K562 (cell line): ENCODE measurements at regions of chr1 and their contacts with region 1.

Region 1: DNA sequence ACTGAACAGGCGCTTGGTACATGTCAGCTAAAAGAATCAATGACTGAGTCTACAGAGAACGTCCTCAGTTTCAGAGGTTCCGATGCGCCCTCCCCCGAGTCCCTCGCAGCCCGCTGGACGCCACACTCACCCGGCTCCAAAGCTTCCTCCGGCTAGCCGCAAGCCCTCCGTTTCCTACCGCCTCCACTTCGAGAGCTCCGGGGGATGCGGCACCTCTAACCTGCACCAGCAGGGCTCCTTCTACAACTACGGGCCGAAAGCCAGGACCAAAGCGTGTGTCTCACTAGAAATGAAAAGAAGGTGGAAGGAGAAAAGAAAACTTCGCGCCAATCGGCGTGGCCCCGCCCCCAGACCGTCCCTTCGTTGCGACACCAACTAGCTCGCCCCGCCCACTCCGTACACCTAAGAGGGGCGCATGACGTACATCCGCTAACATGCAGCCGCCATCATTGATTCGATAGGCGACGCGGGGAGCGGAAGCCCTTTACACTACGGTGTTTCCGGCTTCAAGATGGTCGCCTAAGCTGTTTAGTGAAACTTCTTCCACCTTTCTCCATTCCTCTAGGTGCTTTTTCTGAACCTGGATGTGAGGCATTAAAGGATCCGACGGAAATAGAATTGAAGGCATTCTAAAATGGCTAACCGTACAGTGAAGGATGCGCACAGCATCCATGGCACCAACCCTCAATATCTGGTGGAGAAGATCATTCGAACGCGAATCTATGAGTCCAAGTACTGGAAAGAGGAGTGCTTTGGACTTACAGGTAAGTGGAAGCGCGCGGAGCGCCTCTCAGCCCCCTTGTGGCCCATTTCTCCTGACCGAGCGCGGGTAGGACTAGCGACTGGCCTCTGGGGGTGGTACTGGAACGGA is at the starts of genes ORC1 and PRPF38A:
- DNase-seq: peak; percentile 94 to 100 (median 97)
- ATAC-seq: peak; percentile 90
- H3K4me3 ChIP-seq: peak within 1 kb of the TSS; percentile 80
- H3K27ac ChIP-seq: peak within 1 kb of the TSS; percentile 98
- H3K4me1 ChIP-seq: peaks cover 12 to 27% of the 10 kb centered on the region in 2 experiments; a peak in 4 of 5 replicates
- H3K27me3 ChIP-seq: no peaks in the 10 kb centered on the region
- CTCF ChIP-seq: peak; percentile 90 to 99 (median 95)
- EP300 ChIP-seq: no peak; the same call in 1 of the 2 replicates
- POLR2A ChIP-seq: peak; percentile 98
- RAD21 ChIP-seq: peak in 1 of 2 experiments; percentile 69; a peak in 2 of 4 replicates
- polyA plus RNA-seq, gene ORC1: 26.4 to 46.9 TPM
- polyA plus RNA-seq, gene PRPF38A: 126 to 198 TPM

Region 2: GRCh38 chr1:52365746-52366516 is 38.4 kb before region 1 on chr1 and contains the start of gene CC2D1B:
- CTCF ChIA-PET with region 1: no interaction called
- POLR2A ChIA-PET with region 1: interaction called, 29 read pairs
- in situ Hi-C with region 1: no loop called
- intact Hi-C with region 1: no loop called
- DNase-seq: peak; percentile 100
- ATAC-seq: peak; percentile 96
- H3K4me3 ChIP-seq: peak within 1 kb of the TSS; percentile 77
- H3K27ac ChIP-seq: peak within 1 kb of the TSS; percentile 93
- H3K4me1 ChIP-seq: peaks cover 21 to 37% of the 10 kb centered on the region in 2 experiments
- H3K27me3 ChIP-seq: no peaks in the 10 kb centered on the region
- CTCF ChIP-seq: peak in 2 of 3 experiments; percentile 21 to 27; a peak in 4 of 6 replicates
- EP300 ChIP-seq: peak; percentile 18; the same call in 1 of the 2 replicates
- POLR2A ChIP-seq: peak; percentile 93
- RAD21 ChIP-seq: peak in 1 of 2 experiments; percentile 15; a peak in 1 of 4 replicates
- polyA plus RNA-seq, gene CC2D1B: 1.2 to 1.5 TPM

Region 3: GRCh38 chr1:52432807-52433206 is 28.5 kb after region 1 on chr1:
- CTCF ChIA-PET with region 1: no interaction called
- POLR2A ChIA-PET with region 1: interaction called, 10 read pairs
- in situ Hi-C with region 1: no loop called
- intact Hi-C with region 1: no loop called
- DNase-seq: no peak
- ATAC-seq: peak; percentile 31; the same call in 1 of the 3 replicates
- H3K4me3 ChIP-seq: no peak overlapping the region
- H3K27ac ChIP-seq: no peak overlapping the region
- H3K4me1 ChIP-seq: no peaks in the 10 kb centered on the region
- H3K27me3 ChIP-seq: no peaks in the 10 kb centered on the region
- CTCF ChIP-seq: no peak
- EP300 ChIP-seq: no peak
- POLR2A ChIP-seq: no peak
- RAD21 ChIP-seq: no peak

Region 4: DNA sequence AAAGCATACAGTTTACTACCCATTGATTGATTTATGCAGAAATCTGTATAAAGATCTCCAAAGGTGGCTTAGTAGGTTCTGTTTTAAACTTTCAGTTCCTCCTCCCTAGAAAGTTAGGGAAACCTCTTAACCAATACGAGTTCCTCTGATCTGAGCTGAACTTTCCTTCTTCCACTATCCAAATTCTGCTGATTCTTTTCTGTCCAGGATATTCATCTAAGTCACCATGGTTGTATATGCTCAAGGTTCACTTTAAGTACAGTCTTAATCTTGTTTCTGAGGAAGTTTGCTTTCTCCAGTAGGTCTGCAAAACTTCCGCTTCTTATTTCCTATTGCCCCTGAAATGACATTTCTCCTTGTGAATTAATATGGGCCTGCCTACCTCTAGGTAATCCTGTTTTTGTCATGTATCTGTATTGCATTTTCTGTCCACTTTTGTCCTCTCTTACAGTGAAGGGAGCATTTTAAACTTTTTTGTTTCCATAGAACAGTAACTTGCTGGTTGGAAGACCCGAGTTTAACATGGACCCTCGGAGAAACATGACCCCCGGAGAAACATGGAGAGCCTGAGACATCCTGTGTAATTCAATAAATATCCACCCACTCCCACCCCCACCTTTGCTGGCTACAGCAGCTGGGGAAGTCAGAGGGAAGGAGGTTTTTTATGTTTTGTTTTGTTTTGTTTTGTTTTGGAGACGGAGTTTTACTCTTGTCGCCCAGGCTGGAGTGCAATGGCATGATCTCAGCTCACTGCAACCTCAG is 165.3 kb after region 1 on chr1:
- CTCF ChIA-PET with region 1: interaction called, 3 read pairs
- POLR2A ChIA-PET with region 1: interaction called, 3 read pairs
- in situ Hi-C with region 1: no loop called
- intact Hi-C with region 1: loop called (anchors 5 kb)
- DNase-seq: no peak
- ATAC-seq: no peak
- H3K4me3 ChIP-seq: no peak overlapping the region
- H3K27ac ChIP-seq: no peak overlapping the region
- H3K4me1 ChIP-seq: peaks cover 5 to 6% of the 10 kb centered on the region in 2 experiments; a peak in 1 of 5 replicates
- H3K27me3 ChIP-seq: no peaks in the 10 kb centered on the region
- CTCF ChIP-seq: no peak
- EP300 ChIP-seq: no peak
- POLR2A ChIP-seq: no peak
- RAD21 ChIP-seq: no peak

Region 5: DNA sequence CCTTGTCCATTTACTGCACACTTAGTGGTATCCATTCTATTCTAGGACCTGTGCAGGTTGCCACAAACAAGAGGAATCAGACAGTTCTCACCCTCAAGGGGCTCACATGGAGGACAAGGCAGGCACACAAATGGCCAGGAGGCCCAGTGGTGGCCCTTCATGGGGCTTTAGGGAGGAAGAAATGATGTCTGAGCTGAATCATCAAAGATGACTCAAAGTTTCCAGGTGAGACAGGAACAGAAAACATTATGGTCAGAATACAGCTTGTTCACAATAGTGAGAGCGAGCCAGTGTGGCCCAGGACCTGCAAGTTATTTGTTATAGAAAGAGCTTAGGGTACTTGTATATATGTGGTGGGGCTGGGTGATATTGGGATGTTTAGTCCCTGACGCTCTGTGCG is 255.0 kb after region 1 on chr1:
- CTCF ChIA-PET with region 1: no interaction called
- POLR2A ChIA-PET with region 1: no interaction called
- in situ Hi-C with region 1: no loop called
- intact Hi-C with region 1: no loop called
- DNase-seq: no peak
- ATAC-seq: no peak
- H3K4me3 ChIP-seq: no peak overlapping the region
- H3K27ac ChIP-seq: no peak overlapping the region
- H3K4me1 ChIP-seq: peaks cover 2% of the 10 kb centered on the region in 2 experiments; a peak in 3 of 5 replicates
- H3K27me3 ChIP-seq: no peaks in the 10 kb centered on the region
- CTCF ChIP-seq: no peak
- EP300 ChIP-seq: no peak
- POLR2A ChIP-seq: no peak
- RAD21 ChIP-seq: no peak

Region 6: DNA sequence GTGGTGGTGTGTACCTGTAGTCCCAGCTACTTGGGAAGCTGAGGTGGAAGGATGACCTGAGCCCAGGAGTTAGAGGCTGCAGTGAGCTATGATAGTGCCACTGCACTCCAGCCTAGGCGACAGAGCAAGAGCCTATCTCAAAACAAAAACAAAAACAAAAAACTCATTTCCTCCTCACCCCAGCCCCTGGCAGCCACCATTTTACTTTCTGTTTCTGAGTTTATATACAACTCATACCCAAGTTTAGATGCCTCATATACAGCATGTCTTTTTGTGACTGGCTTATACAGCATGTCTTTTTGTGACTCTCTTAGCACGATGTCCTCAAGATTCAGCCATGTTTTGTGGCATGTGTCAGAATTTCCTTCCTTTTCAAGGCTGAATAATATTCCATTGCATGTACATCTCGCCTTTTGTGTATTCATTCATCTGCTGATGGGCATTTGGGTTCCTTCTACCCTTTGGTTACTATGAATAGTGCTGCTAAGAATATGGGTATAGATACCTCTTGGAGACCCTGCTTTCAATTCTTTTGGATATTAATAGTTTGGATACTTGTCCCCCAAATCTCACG is 279.1 kb after region 1 on chr1:
- CTCF ChIA-PET with region 1: interaction called, 5 read pairs
- POLR2A ChIA-PET with region 1: interaction called, 20 read pairs
- in situ Hi-C with region 1: loop called (anchors 10 kb)
- intact Hi-C with region 1: loop called (anchors 5 kb)
- DNase-seq: no peak
- ATAC-seq: no peak
- H3K4me3 ChIP-seq: no peak overlapping the region
- H3K27ac ChIP-seq: no peak overlapping the region
- H3K4me1 ChIP-seq: no peaks in the 10 kb centered on the region; a peak in 1 of 5 replicates
- H3K27me3 ChIP-seq: no peaks in the 10 kb centered on the region; a peak in 1 of 5 replicates
- CTCF ChIP-seq: no peak
- EP300 ChIP-seq: no peak
- POLR2A ChIP-seq: peak; percentile 45; the same call in 1 of the 2 replicates
- RAD21 ChIP-seq: no peak

Region 7: DNA sequence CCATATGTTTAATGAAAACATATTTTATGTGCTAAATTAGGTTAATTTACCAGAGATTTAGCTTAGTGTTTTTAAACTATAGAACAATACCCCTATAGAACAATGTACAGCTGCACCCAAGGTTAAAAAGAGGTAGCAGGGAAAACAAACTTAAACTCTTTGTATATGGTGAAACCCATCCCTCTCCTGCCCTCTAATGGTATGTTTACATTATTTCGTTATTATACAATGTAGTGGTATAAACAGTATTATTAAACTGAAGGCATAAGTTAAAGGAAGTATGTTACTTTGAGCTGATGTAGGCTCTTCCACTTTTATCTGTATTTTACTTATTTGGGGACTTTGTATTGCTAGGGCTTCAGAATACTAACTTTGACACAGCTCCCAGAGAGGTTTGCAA is 421.5 kb after region 1 on chr1:
- CTCF ChIA-PET with region 1: no interaction called
- POLR2A ChIA-PET with region 1: no interaction called
- in situ Hi-C with region 1: no loop called
- intact Hi-C with region 1: no loop called
- DNase-seq: peak in 1 of 4 experiments; percentile 25
- ATAC-seq: peak; percentile 77
- H3K4me3 ChIP-seq: no peak overlapping the region
- H3K27ac ChIP-seq: no peak overlapping the region
- H3K4me1 ChIP-seq: no peaks in the 10 kb centered on the region
- H3K27me3 ChIP-seq: no peaks in the 10 kb centered on the region
- CTCF ChIP-seq: peak; percentile 21 to 66 (median 48); a peak in 5 of 6 replicates
- EP300 ChIP-seq: no peak
- POLR2A ChIP-seq: no peak
- RAD21 ChIP-seq: peak; percentile 47 to 70